Activated CD4-positive, alpha-beta memory T cell treated with anti-CD3 and anti-CD28 coated beads, Interleukin-2, amount 10 ng/mL, durations not matched to agents 7 days and 5 days (primary cell): ENCODE measurements at regions of chr1 and their contacts with region 1.

Region 1: GRCh38 chr1:40032240-40032891 is 8.2 kb upstream of the CAP1 start:
- DNase-seq: peak; percentile 58
- H3K4me3 Mint-ChIP-seq: no peak overlapping the region
- H3K27ac Mint-ChIP-seq: no peak overlapping the region
- H3K4me1 Mint-ChIP-seq: peaks cover 39% of the 10 kb centered on the region
- H3K27me3 Mint-ChIP-seq: peaks cover 12% of the 10 kb centered on the region

Region 2: GRCh38 chr1:39816415-39817090 is 215.8 kb before region 1 on chr1:
- CTCF ChIA-PET with region 1: interaction called, 15 read pairs
- POLR2A ChIA-PET with region 1: no interaction called
- DNase-seq: peak; percentile 56
- H3K4me3 Mint-ChIP-seq: peak overlapping the region; percentile 52
- H3K27ac Mint-ChIP-seq: no peak overlapping the region
- H3K4me1 Mint-ChIP-seq: peaks cover 14% of the 10 kb centered on the region
- H3K27me3 Mint-ChIP-seq: peaks cover 12% of the 10 kb centered on the region

Region 3: GRCh38 chr1:39901698-39902459 is 130.5 kb before region 1 on chr1 and contains the start of gene MYCL:
- CTCF ChIA-PET with region 1: interaction called, 10 read pairs
- POLR2A ChIA-PET with region 1: no interaction called
- DNase-seq: peak; percentile 76
- H3K4me3 Mint-ChIP-seq: peak within 1 kb of the TSS; percentile 66
- H3K27ac Mint-ChIP-seq: no peak within 1 kb of the TSS
- H3K4me1 Mint-ChIP-seq: peaks cover 5% of the 10 kb centered on the region
- H3K27me3 Mint-ChIP-seq: peaks cover 64% of the 10 kb centered on the region
- total RNA-seq, gene MYCL: 0.10 to 0.18 TPM

Region 4: GRCh38 chr1:39919545-39919944 is 112.8 kb before region 1 on chr1:
- CTCF ChIA-PET with region 1: interaction called, 57 read pairs
- POLR2A ChIA-PET with region 1: interaction called, 7 read pairs
- DNase-seq: peak; percentile 33
- H3K4me3 Mint-ChIP-seq: no peak overlapping the region
- H3K27ac Mint-ChIP-seq: no peak overlapping the region
- H3K4me1 Mint-ChIP-seq: no peaks in the 10 kb centered on the region
- H3K27me3 Mint-ChIP-seq: peaks cover 1% of the 10 kb centered on the region

Region 5: DNA sequence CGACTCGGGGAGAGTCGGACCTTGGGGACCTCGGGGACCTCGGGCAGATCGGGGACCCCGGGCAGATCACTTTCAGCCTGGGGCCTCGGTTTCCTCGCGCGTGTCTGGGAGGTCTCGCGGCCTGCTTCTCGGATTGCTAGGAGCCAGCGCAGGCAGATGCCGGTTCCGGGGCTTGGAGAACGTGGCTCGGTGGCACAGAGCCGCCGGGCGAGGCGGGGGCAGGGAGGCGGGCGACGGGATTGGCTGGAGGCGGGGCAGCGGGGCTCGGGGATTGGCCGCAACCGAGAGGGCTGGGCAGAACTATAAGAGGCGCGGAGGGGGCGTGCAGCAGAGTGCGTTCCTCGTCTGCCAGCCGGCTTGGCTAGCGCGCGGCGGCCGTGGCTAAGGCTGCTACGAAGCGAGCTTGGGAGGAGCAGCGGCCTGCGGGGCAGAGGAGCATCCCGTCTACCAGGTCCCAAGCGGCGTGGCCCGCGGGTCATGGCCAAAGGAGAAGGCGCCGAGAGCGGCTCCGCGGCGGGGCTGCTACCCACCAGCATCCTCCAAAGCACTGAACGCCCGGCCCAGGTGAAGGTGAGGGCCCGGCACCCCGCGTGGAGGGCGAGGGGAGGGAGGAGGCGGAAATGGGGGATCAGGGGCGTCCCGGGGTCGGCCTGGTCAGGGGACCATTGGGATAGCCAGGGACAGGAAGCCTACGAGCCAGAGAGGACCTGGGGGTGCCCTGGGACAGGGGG is 77.4 kb before region 1 on chr1 and contains the start of gene MFSD2A:
- CTCF ChIA-PET with region 1: interaction called, 11 read pairs
- POLR2A ChIA-PET with region 1: interaction called, 3 read pairs
- DNase-seq: peak; percentile 88
- H3K4me3 Mint-ChIP-seq: peak within 1 kb of the TSS; percentile 84
- H3K27ac Mint-ChIP-seq: no peak within 1 kb of the TSS
- H3K4me1 Mint-ChIP-seq: peaks cover 24% of the 10 kb centered on the region
- H3K27me3 Mint-ChIP-seq: peaks cover 4% of the 10 kb centered on the region
- total RNA-seq, gene MFSD2A: 2.4 to 2.5 TPM

Region 6: DNA sequence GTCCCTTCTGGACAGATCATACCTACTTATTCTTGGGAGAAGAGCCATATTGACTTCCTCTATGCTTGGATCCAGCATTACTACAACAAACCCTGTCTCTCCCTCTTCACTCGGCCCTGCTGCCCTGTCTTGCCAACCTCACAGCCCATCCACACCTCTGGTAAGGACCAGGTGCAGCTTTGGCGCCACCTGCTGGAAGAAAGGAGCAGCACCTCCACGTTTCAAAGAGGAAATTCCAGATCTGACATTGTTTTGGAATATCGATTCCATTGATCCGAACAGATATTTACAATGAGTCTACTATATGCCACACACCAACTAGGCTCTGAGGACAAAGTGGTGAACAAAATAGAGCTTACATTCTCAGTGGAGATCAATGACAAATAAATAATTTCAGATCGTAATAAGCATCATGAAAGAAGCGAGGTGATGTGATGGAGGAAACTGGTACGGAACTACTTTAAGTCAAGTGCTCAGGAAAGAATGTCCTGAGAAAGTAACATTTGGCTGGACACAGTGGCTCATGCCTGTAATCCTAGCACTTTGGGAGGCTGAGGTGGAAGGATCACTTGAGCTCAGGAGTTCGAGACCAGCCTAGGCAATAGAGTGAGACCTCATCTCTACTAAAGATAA is 58.7 kb before region 1 on chr1:
- CTCF ChIA-PET with region 1: interaction called, 28 read pairs
- POLR2A ChIA-PET with region 1: interaction called, 3 read pairs
- DNase-seq: peak; percentile 74
- H3K4me3 Mint-ChIP-seq: no peak overlapping the region
- H3K27ac Mint-ChIP-seq: no peak overlapping the region
- H3K4me1 Mint-ChIP-seq: peaks cover 2% of the 10 kb centered on the region
- H3K27me3 Mint-ChIP-seq: no peaks in the 10 kb centered on the region

Region 7: DNA sequence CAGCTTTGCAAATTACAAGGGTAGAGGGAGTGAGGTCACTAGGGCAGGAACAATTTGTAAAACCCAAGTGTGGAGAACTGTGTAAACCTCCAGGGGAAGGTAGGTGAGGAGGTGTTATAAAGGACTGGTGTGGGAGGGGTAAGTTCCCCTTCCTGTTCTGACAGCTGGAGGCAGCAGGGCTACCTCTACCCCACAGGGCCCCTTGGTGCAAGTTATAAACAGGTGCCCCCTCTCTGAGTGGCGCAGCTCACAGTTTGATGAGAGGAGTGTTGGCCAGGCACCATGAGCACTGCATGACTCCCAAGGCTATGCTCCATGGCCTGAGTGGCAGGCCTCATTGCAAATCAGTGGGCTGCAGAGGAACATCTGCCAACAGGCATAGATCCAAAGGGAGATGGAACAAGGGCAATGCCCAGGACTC is 36.4 kb before region 1 on chr1:
- CTCF ChIA-PET with region 1: no interaction called
- POLR2A ChIA-PET with region 1: no interaction called
- DNase-seq: no peak
- H3K4me3 Mint-ChIP-seq: no peak overlapping the region
- H3K27ac Mint-ChIP-seq: no peak overlapping the region
- H3K4me1 Mint-ChIP-seq: peaks cover 10% of the 10 kb centered on the region
- H3K27me3 Mint-ChIP-seq: no peaks in the 10 kb centered on the region

Region 8: DNA sequence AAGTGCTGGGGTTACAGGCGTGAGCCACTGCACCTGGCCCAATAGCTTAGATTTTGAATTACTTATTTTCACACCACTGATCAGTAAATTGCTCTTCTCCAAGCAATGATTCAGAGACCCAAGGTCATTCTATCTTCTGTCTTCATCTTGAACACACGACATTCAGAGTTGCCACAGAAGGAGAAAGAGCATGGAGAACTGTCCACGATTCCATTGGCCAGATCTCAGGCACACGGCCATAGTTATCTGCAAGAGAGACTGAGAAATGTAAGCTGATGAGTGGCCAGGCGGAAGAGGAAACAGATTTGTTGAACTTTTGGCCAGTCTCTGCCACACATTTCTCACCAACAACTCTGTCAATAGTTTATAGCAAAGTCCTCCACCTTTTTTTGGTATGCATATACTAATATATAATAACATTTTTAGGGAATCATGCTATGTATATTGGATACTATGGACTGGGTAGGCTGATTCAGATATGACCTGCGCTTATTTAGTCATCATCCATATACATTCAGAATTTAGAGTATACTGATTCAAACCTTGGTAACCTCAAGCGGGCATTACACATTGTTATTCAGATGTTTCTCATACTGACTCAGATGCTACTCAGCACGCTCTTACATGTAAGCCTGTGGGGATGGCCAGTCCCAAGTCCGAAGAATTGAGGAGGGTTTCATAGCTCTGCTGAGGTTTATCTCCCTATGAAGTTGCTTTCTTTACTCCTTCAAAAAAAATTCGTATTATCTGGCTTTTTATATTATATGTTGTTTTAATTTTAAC is 17.4 kb before region 1 on chr1:
- CTCF ChIA-PET with region 1: interaction called, 13 read pairs
- POLR2A ChIA-PET with region 1: interaction called, 5 read pairs
- DNase-seq: no peak
- H3K4me3 Mint-ChIP-seq: no peak overlapping the region
- H3K27ac Mint-ChIP-seq: no peak overlapping the region
- H3K4me1 Mint-ChIP-seq: peaks cover 14% of the 10 kb centered on the region
- H3K27me3 Mint-ChIP-seq: peaks cover 3% of the 10 kb centered on the region

Region 9: DNA sequence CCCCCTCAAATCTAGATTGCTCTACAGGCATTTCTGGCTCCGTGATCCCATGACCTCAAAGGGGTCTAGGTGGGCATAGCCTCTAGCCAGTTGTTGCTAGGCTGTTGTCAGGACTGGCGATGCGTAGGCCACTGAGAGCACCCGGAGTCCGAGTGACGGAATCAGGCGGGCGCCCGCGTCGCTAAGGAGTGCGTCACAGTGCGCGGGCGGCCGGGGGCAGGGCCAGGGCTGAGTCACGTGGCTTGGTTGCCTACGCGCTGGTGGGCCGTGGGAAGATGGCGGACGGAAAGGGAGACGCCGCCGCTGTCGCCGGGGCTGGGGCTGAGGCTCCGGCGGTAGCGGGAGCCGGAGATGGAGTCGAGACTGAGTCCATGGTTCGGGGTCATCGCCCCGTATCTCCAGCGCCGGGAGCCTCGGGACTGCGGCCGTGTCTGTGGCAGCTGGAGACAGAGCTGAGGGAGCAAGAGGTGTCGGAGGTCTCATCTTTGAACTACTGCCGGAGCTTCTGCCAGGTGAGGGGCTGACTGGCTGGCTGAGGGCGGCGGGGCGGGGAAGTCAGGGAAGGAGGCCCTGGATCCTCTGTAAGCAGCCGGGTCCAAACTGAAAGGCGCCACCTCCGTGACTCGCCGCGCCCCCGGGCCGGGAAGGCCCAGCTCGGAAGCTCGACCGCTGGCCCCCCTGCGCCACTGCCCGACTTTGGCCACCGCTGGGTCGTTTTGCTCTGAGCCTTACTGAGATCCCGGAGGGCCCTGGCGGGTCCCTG is 128.9 kb after region 1 on chr1 and contains the start of gene RLF:
- CTCF ChIA-PET with region 1: no interaction called
- POLR2A ChIA-PET with region 1: no interaction called
- DNase-seq: peak; percentile 96
- H3K4me3 Mint-ChIP-seq: no peak within 1 kb of the TSS
- H3K27ac Mint-ChIP-seq: no peak within 1 kb of the TSS
- H3K4me1 Mint-ChIP-seq: peaks cover 5% of the 10 kb centered on the region
- H3K27me3 Mint-ChIP-seq: no peaks in the 10 kb centered on the region
- total RNA-seq, gene RLF: 23.8 to 24.6 TPM